CD8-positive, alpha-beta T cell (primary cell): ENCODE measurements at regions of chr3 and their contacts with region 1.

Region 1: DNA sequence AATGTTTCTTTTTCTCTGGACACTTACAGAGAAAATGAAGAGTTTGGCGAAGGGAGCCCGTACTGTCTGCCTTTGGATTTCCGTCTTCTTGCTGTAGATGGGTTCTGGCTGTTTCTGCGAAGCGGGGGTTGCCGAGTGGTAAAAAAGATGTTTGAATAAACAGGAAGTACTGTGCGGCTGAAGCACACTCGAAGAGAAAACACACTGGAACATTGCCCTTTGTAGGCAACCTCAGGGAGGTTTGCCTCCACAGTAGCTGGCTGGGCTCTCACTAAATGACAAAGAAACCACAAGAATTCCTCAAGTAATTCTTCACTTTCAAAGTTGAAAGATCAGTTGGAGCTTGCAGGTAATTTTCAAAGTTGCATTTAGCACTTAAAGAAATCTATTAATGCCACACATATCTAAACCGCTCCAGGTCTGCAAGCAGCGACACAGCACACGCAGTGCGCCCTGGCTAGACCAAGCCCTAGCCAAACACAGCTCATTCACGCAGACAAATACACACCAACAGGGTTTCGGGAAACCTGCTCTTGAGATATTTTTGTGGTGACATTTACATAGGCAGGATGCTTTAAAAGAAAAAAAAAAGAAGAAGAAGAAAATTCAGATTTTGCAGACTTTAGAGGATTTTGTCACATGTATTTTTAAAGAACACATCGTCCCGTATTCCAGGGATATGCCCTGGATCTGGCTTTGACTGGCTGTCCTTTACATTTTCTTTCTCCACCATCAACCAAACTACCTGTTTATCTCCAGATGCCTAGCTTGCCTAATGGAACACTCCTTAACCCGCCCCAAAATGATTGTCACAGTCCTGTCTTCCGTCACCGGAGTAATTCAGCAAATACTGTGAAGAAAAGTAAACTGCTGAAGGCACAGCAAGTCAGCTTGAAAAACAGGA is 452.8 kb downstream of the FOXP1 start:
- DNase-seq: peak; percentile 52 to 90 (median 77)
- ATAC-seq: peak; percentile 74
- H3K4me3 ChIP-seq: peak overlapping the region; percentile 56 to 57
- H3K4me3 Mint-ChIP-seq: peak overlapping the region; percentile 87
- H3K27ac ChIP-seq: peak overlapping the region; percentile 82 to 88
- H3K27ac Mint-ChIP-seq: peak overlapping the region; percentile 93
- H3K4me1 ChIP-seq: peaks cover 57% of the 10 kb centered on the region
- H3K4me1 Mint-ChIP-seq: peaks cover 80% of the 10 kb centered on the region
- H3K27me3 ChIP-seq: no peaks in the 10 kb centered on the region
- H3K27me3 Mint-ChIP-seq: no peaks in the 10 kb centered on the region
- CTCF ChIP-seq: no peak

Region 2: DNA sequence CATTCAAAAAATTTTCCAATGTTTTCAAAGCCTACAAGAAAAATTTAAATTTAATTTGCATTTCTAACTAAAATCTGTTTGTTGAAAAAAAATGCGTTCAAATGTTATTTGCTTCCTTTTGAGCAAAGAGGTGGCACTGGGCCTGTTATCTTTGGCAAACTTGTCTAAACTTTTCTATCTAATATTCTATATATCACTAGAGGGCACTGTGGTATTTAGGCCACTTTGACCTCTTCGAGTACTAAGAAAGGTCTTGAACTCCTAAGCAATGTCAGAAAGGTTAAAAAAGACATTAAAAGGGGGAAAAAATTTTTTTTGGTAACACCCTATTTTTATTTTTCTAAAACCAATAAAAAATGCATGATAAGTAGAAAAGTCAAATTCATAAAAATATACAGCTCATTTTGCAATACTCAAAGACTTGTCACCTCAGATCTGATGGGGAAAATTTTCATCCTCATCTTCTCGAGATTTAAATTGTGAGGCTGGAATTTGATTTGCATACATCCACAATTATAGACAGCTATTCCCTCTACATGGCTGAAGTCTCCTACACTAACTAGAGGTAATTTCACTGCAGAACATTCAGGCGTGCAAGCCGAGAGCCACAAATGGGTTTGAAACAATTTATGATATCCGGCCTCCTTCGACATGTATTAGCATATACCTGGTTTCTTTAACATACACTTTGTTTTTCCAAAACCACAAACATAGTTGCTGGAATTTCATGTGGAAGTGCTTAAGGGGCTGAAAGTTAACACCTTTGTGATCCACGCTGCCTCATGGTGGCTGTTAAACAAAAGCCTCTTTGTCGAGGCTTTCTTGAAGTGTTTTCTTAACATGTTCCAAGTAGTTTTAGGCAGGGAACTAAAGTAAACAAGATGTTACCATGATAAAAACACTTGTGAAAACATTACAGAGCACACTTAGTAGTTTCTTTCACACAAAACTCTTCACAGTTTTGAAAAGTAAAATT is 123.6 kb before region 1 on chr3:
- CTCF ChIA-PET with region 1: interaction called, 5 read pairs
- POLR2A ChIA-PET with region 1: no interaction called
- intact Hi-C with region 1: loop called (anchors 5 kb)
- DNase-seq: peak in 2 of 9 experiments; percentile 44 to 64
- ATAC-seq: no peak
- H3K4me3 ChIP-seq: no peak overlapping the region
- H3K4me3 Mint-ChIP-seq: no peak overlapping the region
- H3K27ac ChIP-seq: no peak overlapping the region
- H3K27ac Mint-ChIP-seq: peak overlapping the region; percentile 85
- H3K4me1 ChIP-seq: peaks cover 54% of the 10 kb centered on the region
- H3K4me1 Mint-ChIP-seq: peaks cover 74% of the 10 kb centered on the region
- H3K27me3 ChIP-seq: no peaks in the 10 kb centered on the region
- H3K27me3 Mint-ChIP-seq: no peaks in the 10 kb centered on the region
- CTCF ChIP-seq: peak; percentile 30

Region 3: GRCh38 chr3:71087143-71088018 is 43.3 kb before region 1 on chr3:
- CTCF ChIA-PET with region 1: interaction called, 3 read pairs
- POLR2A ChIA-PET with region 1: interaction called, 4 read pairs
- intact Hi-C with region 1: loop called (anchors 2 to 5 kb)
- DNase-seq: peak in 7 of 9 experiments; percentile 19 to 79 (median 58)
- ATAC-seq: peak; percentile 74
- H3K4me3 ChIP-seq: no peak overlapping the region
- H3K4me3 Mint-ChIP-seq: peak overlapping the region; percentile 61
- H3K27ac ChIP-seq: peak overlapping the region; percentile 52 to 59
- H3K27ac Mint-ChIP-seq: peak overlapping the region; percentile 94
- H3K4me1 ChIP-seq: peaks cover 66% of the 10 kb centered on the region
- H3K4me1 Mint-ChIP-seq: peaks cover 83% of the 10 kb centered on the region
- H3K27me3 ChIP-seq: no peaks in the 10 kb centered on the region
- H3K27me3 Mint-ChIP-seq: no peaks in the 10 kb centered on the region
- CTCF ChIP-seq: no peak

Region 4: DNA sequence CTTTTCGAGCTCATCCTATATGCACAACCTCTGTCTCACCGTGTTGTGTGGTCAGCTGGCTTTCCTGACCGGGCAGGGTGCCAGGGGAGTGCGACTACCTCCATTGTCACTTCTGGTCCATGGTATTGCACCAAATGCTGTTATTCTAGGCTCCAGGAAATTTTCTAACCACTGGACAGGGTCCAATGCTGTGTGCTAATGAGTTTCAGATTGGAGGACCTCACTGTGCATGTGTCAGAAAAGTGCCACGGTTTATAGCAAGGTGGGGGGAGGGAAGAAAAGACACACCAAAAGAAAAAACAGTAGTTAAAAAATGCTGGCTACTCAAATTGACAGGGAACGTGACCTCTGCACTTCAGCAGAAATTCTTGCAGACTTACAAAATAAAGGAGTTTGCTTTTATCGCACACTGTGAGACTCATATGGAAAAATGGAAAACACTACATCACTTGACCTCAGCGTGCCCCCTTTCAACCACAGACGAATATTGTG is 27.2 kb before region 1 on chr3:
- CTCF ChIA-PET with region 1: no interaction called
- POLR2A ChIA-PET with region 1: no interaction called
- intact Hi-C with region 1: no loop called
- DNase-seq: no peak
- ATAC-seq: no peak
- H3K4me3 ChIP-seq: no peak overlapping the region
- H3K4me3 Mint-ChIP-seq: no peak overlapping the region
- H3K27ac ChIP-seq: no peak overlapping the region
- H3K27ac Mint-ChIP-seq: peak overlapping the region; percentile 78
- H3K4me1 ChIP-seq: peaks cover 65% of the 10 kb centered on the region
- H3K4me1 Mint-ChIP-seq: peaks cover 87% of the 10 kb centered on the region
- H3K27me3 ChIP-seq: no peaks in the 10 kb centered on the region
- H3K27me3 Mint-ChIP-seq: no peaks in the 10 kb centered on the region
- CTCF ChIP-seq: no peak

Region 5: DNA sequence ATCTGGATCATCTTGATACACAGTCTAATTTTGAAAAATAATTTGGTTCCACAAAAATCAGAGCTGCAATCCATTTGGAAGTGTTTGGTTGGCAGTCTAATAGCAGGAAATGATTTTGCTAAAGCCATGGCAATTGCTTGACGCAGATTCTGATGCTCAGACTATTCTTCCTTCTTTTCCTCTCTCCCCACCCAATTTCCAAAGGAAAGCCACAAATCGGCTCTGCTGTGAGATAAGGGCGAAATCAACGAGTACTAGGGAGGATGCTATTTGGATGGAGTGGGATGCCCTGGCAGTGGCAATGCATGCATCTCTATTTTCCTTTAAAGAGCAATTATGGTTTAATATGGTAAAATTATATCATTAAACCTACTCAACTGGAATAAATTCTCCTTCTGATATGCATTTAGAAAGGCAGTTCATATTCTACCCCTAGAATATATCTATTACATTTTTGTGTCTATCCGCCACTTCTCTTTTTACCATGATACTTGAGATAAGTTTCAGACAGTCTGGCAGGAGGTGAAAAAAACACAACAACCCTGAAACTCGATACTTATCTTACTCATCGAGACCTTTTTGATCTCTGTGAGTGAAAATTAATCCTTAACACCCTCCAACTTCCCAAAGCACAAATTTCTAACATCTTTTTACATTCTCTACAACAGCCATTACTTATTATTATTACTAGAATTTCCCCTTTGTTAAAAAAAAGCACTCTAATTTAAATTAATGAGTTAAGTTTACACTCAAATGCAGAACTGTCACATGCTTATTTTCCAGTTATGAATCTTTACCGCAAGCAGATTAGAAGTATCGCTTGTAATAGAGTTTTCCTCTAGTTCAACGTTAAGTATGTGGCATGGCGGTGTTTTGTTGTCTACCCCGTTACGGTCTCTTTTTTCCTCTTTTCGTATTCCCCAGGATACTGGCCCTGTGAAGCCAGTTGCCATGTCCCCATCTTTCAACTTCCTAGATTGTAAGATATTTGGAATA is 19.5 kb after region 1 on chr3:
- CTCF ChIA-PET with region 1: no interaction called
- POLR2A ChIA-PET with region 1: interaction called, 4 read pairs
- intact Hi-C with region 1: loop called in 1 of 2 experiments (anchors 2 kb)
- DNase-seq: no peak
- ATAC-seq: no peak
- H3K4me3 ChIP-seq: no peak overlapping the region
- H3K4me3 Mint-ChIP-seq: no peak overlapping the region
- H3K27ac ChIP-seq: no peak overlapping the region
- H3K27ac Mint-ChIP-seq: peak overlapping the region; percentile 83
- H3K4me1 ChIP-seq: peaks cover 4% of the 10 kb centered on the region
- H3K4me1 Mint-ChIP-seq: peaks cover 65% of the 10 kb centered on the region
- H3K27me3 ChIP-seq: no peaks in the 10 kb centered on the region
- H3K27me3 Mint-ChIP-seq: no peaks in the 10 kb centered on the region
- CTCF ChIP-seq: no peak

Region 6: GRCh38 chr3:71201939-71202338 is 71.2 kb after region 1 on chr3:
- CTCF ChIA-PET with region 1: interaction called, 3 read pairs
- POLR2A ChIA-PET with region 1: no interaction called
- intact Hi-C with region 1: loop called in 1 of 2 experiments (anchors 5 kb)
- DNase-seq: no peak
- ATAC-seq: no peak
- H3K4me3 ChIP-seq: no peak overlapping the region
- H3K4me3 Mint-ChIP-seq: no peak overlapping the region
- H3K27ac ChIP-seq: no peak overlapping the region
- H3K27ac Mint-ChIP-seq: peak overlapping the region; percentile 55
- H3K4me1 ChIP-seq: peaks cover 30% of the 10 kb centered on the region
- H3K4me1 Mint-ChIP-seq: peaks cover 68% of the 10 kb centered on the region
- H3K27me3 ChIP-seq: no peaks in the 10 kb centered on the region
- H3K27me3 Mint-ChIP-seq: no peaks in the 10 kb centered on the region
- CTCF ChIP-seq: no peak

Region 7: DNA sequence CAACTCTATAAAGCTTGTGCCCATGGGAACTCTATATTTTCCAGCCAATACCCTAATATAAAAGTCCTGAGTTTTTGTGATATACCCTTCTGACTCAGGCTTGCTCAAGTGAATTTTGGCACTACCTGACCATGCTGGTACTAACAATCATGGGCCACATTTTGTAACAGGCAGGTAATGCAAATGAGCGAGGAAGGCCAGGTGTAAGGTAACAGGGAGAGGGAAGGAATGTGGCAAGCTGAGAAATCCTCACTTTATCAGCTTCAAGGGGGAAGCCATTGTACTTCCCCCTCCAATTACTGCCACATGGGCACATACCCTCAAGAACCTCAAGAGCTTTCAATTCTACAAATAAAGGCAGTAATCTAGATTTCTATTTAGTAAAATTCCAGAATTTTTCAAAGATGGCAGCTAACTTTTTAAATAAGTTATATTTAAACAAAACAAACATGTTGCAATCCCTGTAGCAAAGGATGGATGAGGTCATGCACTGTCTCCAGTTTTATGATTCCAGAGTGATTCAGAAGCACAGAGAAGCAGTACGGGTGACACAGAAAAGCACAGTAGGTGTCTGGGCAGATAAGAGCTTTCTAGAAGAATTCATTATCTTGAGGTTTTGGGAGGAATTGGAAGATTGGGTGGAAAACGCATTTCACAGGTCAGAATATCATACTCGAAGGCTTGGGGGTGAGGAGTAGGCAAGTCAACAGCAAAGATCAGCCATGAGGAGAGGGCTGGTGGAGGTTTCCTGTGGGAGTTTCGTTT is 365.2 kb after region 1 on chr3:
- CTCF ChIA-PET with region 1: interaction called, 4 read pairs
- POLR2A ChIA-PET with region 1: interaction called, 6 read pairs
- intact Hi-C with region 1: loop called in 1 of 2 experiments (anchors 5 kb)
- DNase-seq: peak in 2 of 9 experiments; percentile 48 to 69
- ATAC-seq: no peak
- H3K4me3 ChIP-seq: peak overlapping the region; percentile 38 to 39
- H3K4me3 Mint-ChIP-seq: peak overlapping the region; percentile 76
- H3K27ac ChIP-seq: peak overlapping the region; percentile 46 to 80
- H3K27ac Mint-ChIP-seq: peak overlapping the region; percentile 94
- H3K4me1 ChIP-seq: peaks cover 65% of the 10 kb centered on the region
- H3K4me1 Mint-ChIP-seq: peaks cover 83% of the 10 kb centered on the region
- H3K27me3 ChIP-seq: no peaks in the 10 kb centered on the region
- H3K27me3 Mint-ChIP-seq: no peaks in the 10 kb centered on the region
- CTCF ChIP-seq: no peak